Natural killer cell (primary cell): ENCODE measurements at regions of chr1 and their contacts with region 1.

Region 1: DNA sequence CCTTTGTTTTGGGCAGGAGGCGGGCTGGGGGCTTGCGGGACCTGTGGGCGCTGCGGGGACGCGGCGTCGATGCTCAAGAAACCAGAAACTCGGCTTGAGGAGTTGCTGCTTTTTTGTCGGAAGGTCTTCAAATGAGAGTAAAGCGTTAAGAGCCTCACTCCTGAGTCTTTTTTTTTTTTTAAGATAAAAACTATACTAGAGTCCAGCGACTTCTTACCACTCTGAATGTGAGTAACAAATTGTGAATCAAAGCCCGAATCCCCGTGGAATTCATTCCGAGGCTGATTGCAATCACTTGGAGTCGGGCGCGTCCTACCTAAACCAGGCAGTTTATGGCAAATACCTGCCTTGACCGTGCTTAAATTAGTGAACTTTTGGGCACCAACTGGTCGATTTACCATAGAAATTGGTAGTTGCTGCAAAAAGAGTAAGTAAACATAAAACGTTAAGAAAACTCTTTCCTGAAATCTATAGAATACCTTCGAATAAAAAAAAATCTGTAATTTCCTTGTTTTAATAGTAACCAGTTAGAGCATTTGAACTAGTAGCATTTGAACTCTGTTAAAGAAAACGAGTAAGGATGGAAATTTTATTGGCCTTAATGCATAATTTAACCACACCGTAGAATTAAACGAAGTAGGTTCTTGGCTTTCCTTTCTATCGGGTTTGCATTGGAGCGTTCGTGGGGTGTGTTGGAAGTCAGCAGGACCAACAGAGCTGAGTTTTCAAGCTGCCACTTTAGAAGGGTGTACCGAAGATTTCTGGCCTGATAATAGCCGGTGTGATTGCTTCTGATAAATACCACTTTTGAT is 769 bp downstream of the GPSM2 start:
- DNase-seq: peak in 1 of 2 donors; percentile 13
- ATAC-seq: no peak
- H3K4me3 ChIP-seq: peak overlapping the region; percentile 54
- H3K4me3 Mint-ChIP-seq: peak overlapping the region; percentile 94
- H3K27ac ChIP-seq: peak overlapping the region; percentile 0
- H3K27ac Mint-ChIP-seq: peak overlapping the region; percentile 77 to 86
- H3K4me1 ChIP-seq: peaks cover 17% of the 10 kb centered on the region
- H3K4me1 Mint-ChIP-seq: peaks cover 12 to 13% of the 10 kb centered on the region in 2 donors
- H3K27me3 ChIP-seq: no peaks in the 10 kb centered on the region
- H3K27me3 Mint-ChIP-seq: peaks cover 8 to 12% of the 10 kb centered on the region in 2 donors
- CTCF ChIP-seq: no peak

Region 2: DNA sequence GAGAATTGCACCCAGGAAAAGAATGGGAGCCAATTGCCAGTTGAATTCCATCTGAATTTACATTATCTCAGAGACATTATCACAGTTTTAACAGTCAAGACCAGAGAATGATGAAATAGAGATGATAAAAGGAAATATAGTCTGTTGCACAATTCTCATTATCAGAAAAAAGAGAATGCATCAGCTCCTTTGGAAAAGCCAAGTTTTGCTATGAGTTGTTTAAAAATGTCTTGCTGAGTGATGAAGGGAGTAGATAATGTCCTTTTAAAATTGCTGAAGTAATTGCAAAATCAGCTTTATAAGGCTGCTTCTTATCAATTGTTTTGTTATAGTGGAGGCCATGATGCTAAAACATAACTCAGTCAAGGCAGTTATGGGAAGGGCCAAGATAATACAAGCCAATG is 355.6 kb before region 1 on chr1:
- intact Hi-C with region 1: no loop called
- DNase-seq: no peak
- ATAC-seq: peak in 1 of 3 donors; percentile 21
- H3K4me3 ChIP-seq: no peak overlapping the region
- H3K4me3 Mint-ChIP-seq: no peak overlapping the region
- H3K27ac ChIP-seq: no peak overlapping the region
- H3K27ac Mint-ChIP-seq: no peak overlapping the region
- H3K4me1 ChIP-seq: no peaks in the 10 kb centered on the region
- H3K4me1 Mint-ChIP-seq: no peaks in the 10 kb centered on the region
- H3K27me3 ChIP-seq: no peaks in the 10 kb centered on the region
- H3K27me3 Mint-ChIP-seq: peaks cover 28 to 43% of the 10 kb centered on the region in 2 donors
- CTCF ChIP-seq: no peak

Region 3: GRCh38 chr1:108963052-108963686 is 85.6 kb after region 1 on chr1 and contains the start of gene CLCC1:
- intact Hi-C with region 1: loop called (anchors 5 kb)
- DNase-seq: peak; percentile 88 to 95
- ATAC-seq: peak; percentile 88 to 95 (median 94)
- H3K4me3 ChIP-seq: peak within 1 kb of the TSS; percentile 52
- H3K4me3 Mint-ChIP-seq: peak within 1 kb of the TSS; percentile 93
- H3K27ac ChIP-seq: peak within 1 kb of the TSS; percentile 82
- H3K27ac Mint-ChIP-seq: peak within 1 kb of the TSS; percentile 89 to 90
- H3K4me1 ChIP-seq: peaks cover 18% of the 10 kb centered on the region
- H3K4me1 Mint-ChIP-seq: peaks cover 20 to 24% of the 10 kb centered on the region in 2 donors
- H3K27me3 ChIP-seq: peaks cover 3% of the 10 kb centered on the region
- H3K27me3 Mint-ChIP-seq: peaks cover 0 to 10% of the 10 kb centered on the region in 2 donors
- CTCF ChIP-seq: no peak
- total RNA-seq, gene CLCC1: 12.8 to 25.8 (median 17.1) TPM